ENCODE measurements at regions of chr9 and their contacts with region 1.

Region 1: DNA sequence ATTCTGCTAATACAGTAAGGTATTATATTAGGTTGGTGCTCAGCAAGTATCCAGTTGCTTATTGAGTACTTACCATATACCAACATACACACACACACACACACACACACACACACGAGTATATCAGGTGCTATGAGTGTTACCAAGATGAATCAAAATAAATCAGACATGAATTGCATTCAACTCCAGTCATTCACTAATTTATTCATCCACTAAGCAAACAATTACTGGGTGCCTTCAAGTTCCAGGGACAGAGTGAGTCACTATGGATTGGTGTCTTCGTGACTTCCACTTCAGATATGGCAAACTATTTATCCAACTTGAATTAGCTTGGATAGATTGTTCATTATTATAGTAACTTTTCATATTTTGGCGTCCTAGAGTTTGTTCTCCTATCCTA is 140.7 kb upstream of the SLC44A1 start:
- DNase-seq: no peak
- ATAC-seq: no peak
- H3K4me3 Mint-ChIP-seq: no peak overlapping the region
- H3K27ac Mint-ChIP-seq: no peak overlapping the region
- H3K4me1 Mint-ChIP-seq: peaks cover 2% of the 10 kb centered on the region
- H3K27me3 Mint-ChIP-seq: no peaks in the 10 kb centered on the region

Region 2: GRCh38 chr9:104895572-104895971 is 208.2 kb before region 1 on chr9:
- CTCF ChIA-PET with region 1: no interaction called
- POLR2A ChIA-PET with region 1: no interaction called
- intact Hi-C with region 1: no loop called
- DNase-seq: no peak
- ATAC-seq: no peak
- H3K4me3 Mint-ChIP-seq: no peak overlapping the region
- H3K27ac Mint-ChIP-seq: no peak overlapping the region
- H3K4me1 Mint-ChIP-seq: peaks cover 8% of the 10 kb centered on the region
- H3K27me3 Mint-ChIP-seq: no peaks in the 10 kb centered on the region

Region 3: DNA sequence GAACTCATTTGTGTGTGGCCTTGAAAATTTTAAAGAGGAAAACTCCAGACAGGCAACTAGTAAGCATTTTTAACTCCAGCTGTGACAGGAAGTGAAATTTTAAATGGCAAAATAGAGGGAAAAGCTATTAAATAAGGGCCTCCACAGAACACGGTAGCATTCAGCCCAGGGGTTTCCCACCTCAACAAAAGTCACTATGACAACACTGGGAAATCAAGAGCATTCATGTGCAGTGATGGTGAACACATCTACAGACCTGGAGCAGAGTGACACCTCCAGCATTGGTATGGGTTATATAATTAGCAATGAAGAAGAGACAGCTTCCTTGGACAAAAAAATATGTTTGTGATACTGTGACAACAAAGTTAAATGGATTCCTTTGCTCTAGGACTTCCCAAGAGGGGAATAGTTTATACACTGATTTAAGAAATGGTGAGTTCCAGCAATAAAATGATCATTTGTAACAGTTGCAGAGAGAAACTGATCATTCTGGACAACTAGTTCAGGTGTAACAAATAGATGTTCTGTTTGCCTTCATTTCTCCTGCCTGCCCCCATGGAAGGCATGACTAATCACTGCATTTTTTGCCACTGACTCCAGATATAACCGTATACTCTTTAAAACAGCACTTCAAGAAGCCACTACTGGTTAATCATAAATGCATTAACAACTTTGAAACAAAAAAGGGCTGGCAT is 47.4 kb after region 1 on chr9:
- CTCF ChIA-PET with region 1: no interaction called
- POLR2A ChIA-PET with region 1: no interaction called
- intact Hi-C with region 1: loop called in 1 of 2 experiments (anchors 5 kb)
- DNase-seq: no peak
- ATAC-seq: no peak
- H3K4me3 Mint-ChIP-seq: no peak overlapping the region
- H3K27ac Mint-ChIP-seq: no peak overlapping the region
- H3K4me1 Mint-ChIP-seq: peaks cover 18% of the 10 kb centered on the region
- H3K27me3 Mint-ChIP-seq: no peaks in the 10 kb centered on the region

Measured in activated CD4-positive, alpha-beta T cell treated with anti-CD3 and anti-CD28 coated beads for 36 hours (primary cell).